CD4-positive, alpha-beta T cell (primary cell): ENCODE measurements at regions of chr1 and their contacts with region 1.

Region 1: GRCh38 chr1:26820784-26821269 is 5.7 kb upstream of the ZDHHC18 start:
- DNase-seq: peak in 6 of 14 experiments; percentile 27 to 80 (median 64)
- ATAC-seq: peak; percentile 96
- H3K4me3 ChIP-seq: peak overlapping the region; percentile 38
- H3K4me3 Mint-ChIP-seq: peak overlapping the region; percentile 83
- H3K27ac ChIP-seq: peak overlapping the region; percentile 8 to 55
- H3K27ac Mint-ChIP-seq: peak overlapping the region; percentile 83
- H3K4me1 ChIP-seq: peaks cover 33% of the 10 kb centered on the region
- H3K4me1 Mint-ChIP-seq: peaks cover 36% of the 10 kb centered on the region
- H3K27me3 ChIP-seq: no peaks in the 10 kb centered on the region
- H3K27me3 Mint-ChIP-seq: no peaks in the 10 kb centered on the region
- CTCF ChIP-seq: peak; percentile 60

Region 2: GRCh38 chr1:25796811-25797458 is 1023.9 kb before region 1 on chr1:
- CTCF ChIA-PET with region 1: no interaction called
- POLR2A ChIA-PET with region 1: no interaction called
- intact Hi-C with region 1: no loop called
- DNase-seq: peak; percentile 75 to 92 (median 82)
- ATAC-seq: peak; percentile 65
- H3K4me3 ChIP-seq: no peak overlapping the region
- H3K4me3 Mint-ChIP-seq: peak overlapping the region; percentile 85
- H3K27ac ChIP-seq: peak overlapping the region; percentile 44 to 47
- H3K27ac Mint-ChIP-seq: peak overlapping the region; percentile 89
- H3K4me1 ChIP-seq: peaks cover 67% of the 10 kb centered on the region
- H3K4me1 Mint-ChIP-seq: peaks cover 67% of the 10 kb centered on the region
- H3K27me3 ChIP-seq: no peaks in the 10 kb centered on the region
- H3K27me3 Mint-ChIP-seq: no peaks in the 10 kb centered on the region
- CTCF ChIP-seq: peak; percentile 75

Region 3: DNA sequence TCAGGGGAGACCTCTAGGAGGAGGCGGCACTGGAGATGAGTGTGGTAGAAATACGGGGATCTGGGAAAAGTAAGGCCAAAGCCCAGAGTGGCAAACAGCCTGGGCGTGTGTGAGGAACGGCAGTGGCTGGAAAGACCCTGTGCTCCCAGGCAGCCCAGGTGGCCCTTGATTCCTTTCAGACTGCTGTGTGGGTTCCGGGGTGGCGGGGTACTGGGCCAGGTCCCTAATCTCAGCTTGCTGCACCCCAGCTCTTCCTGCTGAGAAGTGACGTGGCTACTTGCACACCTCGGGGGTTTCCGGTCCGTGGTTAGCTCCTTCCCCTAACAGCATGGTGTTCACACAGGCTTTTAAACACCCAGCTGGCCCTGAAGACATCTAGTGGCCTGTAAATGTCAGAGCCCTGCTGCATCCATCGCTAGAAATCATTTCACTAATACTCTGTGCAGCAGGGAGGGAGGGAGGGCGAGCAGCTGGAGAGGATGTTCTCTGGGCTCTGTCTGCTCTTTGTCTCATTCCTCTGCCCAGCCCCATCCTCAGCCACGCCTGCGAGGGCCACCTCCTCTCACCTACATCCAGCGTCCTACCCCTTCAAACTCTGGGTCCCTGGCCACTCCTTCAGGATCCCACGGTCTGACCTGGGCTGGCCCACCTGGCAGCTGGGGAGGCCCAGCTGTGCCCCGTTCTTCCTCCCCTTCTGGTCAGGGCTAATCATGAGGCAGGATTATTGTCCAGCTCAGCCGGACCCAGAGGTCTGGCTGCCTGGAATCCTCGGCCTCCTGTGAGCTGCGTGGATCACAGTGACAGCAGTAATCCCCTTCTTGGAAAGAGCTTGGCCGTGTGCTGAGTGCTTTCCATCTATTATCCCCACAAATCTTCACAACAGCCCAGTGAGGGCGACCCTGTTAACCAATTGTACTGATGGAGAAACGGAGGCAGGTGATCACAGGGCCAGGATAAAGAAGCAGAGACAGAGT is 12.9 kb after region 1 on chr1:
- CTCF ChIA-PET with region 1: interaction called, 31 read pairs
- POLR2A ChIA-PET with region 1: interaction called, 37 read pairs
- intact Hi-C with region 1: no loop called
- DNase-seq: peak; percentile 76 to 99 (median 86)
- ATAC-seq: peak; percentile 94
- H3K4me3 ChIP-seq: peak overlapping the region; percentile 32
- H3K4me3 Mint-ChIP-seq: peak overlapping the region; percentile 86
- H3K27ac ChIP-seq: peak overlapping the region; percentile 96 to 97
- H3K27ac Mint-ChIP-seq: peak overlapping the region; percentile 100
- H3K4me1 ChIP-seq: peaks cover 75% of the 10 kb centered on the region
- H3K4me1 Mint-ChIP-seq: peaks cover 75% of the 10 kb centered on the region
- H3K27me3 ChIP-seq: no peaks in the 10 kb centered on the region
- H3K27me3 Mint-ChIP-seq: no peaks in the 10 kb centered on the region
- CTCF ChIP-seq: peak; percentile 33

Region 4: DNA sequence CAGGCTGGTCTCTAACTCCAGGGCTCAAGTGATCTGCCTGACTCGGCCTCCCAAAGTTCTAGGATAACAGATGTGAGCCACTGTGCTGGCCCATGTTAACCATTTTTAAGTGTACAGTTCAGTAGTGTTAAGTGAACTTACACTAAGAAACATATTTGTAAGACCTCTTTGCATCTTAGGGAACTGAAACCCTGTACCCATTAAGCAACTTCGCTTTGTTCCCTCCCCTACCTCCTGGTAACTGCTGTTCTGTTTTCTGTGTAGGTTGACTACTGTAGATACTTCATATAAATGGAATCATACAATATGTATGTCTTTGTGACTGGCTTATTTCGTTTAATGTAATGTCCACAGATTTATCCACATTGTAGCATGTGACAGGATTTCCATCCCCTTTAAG is 111.7 kb after region 1 on chr1:
- CTCF ChIA-PET with region 1: no interaction called
- POLR2A ChIA-PET with region 1: no interaction called
- intact Hi-C with region 1: no loop called
- DNase-seq: peak in 2 of 14 experiments; percentile 13 to 34
- ATAC-seq: no peak
- H3K4me3 ChIP-seq: no peak overlapping the region
- H3K4me3 Mint-ChIP-seq: no peak overlapping the region
- H3K27ac ChIP-seq: no peak overlapping the region
- H3K27ac Mint-ChIP-seq: no peak overlapping the region
- H3K4me1 ChIP-seq: no peaks in the 10 kb centered on the region
- H3K4me1 Mint-ChIP-seq: no peaks in the 10 kb centered on the region
- H3K27me3 ChIP-seq: no peaks in the 10 kb centered on the region
- H3K27me3 Mint-ChIP-seq: no peaks in the 10 kb centered on the region
- CTCF ChIP-seq: no peak